Colonic mucosa (tissue), 4 donors: ENCODE measurements at regions of chr14 and their contacts with region 1.

Region 1: GRCh38 chr14:95106971-95107370 is 50.4 kb downstream of the DICER1 start:
- DNase-seq: no peak
- H3K4me3 ChIP-seq: no peak overlapping the region
- H3K27ac ChIP-seq: no peak overlapping the region
- H3K4me1 ChIP-seq: no peaks in the 10 kb centered on the region
- H3K27me3 ChIP-seq: no peaks in the 10 kb centered on the region
- CTCF ChIP-seq: no peak

Region 2: GRCh38 chr14:95023886-95024285 is 83.1 kb before region 1 on chr14:
- intact Hi-C with region 1: no loop called
- DNase-seq: peak; percentile 16
- H3K4me3 ChIP-seq: no peak overlapping the region
- H3K27ac ChIP-seq: no peak overlapping the region
- H3K4me1 ChIP-seq: no peaks in the 10 kb centered on the region
- H3K27me3 ChIP-seq: no peaks in the 10 kb centered on the region
- CTCF ChIP-seq: no peak

Region 3: GRCh38 chr14:95196290-95196689 is 89.3 kb after region 1 on chr14:
- intact Hi-C with region 1: loop called (anchors 10 kb)
- DNase-seq: no peak
- H3K4me3 ChIP-seq: no peak overlapping the region
- H3K27ac ChIP-seq: no peak overlapping the region
- H3K4me1 ChIP-seq: no peaks in the 10 kb centered on the region
- H3K27me3 ChIP-seq: no peaks in the 10 kb centered on the region
- CTCF ChIP-seq: peak; percentile 31